ENCODE measurements at regions of chr12 and their contacts with region 1.

Region 1: DNA sequence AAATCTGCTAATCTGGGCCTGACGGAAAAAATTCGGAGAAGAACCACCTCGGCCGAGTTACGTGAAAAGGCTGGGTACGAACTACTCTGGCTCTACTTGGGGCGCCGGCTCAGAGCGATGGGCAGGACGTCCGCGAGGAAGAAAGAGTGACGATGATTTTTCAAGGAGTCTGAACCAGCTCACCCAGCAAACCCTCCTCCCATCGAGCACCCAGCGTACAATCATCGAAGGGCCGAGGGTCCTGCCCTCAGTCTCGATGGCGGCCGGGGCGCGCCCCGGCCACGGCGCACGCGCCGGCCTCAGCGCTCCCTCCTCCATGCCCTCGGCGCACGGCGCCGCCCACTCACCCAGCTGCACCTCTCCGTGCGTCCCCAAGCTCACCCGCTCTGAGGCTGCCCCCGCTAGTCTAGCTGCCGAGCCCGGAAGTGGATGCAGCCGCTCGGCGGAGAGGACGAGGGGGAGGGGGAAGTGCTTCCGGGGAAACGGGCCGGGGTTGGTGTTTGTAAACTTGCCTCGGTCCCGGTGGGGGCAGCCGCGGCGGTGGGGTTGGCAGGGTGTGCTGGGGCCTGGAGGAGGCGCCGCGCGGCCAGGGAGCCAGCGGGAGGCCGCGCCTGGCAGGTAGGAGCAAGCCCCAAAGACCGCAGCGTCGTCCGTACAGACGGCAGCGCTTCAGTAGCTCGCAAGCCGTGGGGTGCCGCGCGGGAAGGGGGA is at the starts of genes CSAD and ZNF740:
- DNase-seq: peak; percentile 98
- H3K4me3 Mint-ChIP-seq: peak within 1 kb of the TSS; percentile 87
- H3K27ac Mint-ChIP-seq: peak within 1 kb of the TSS; percentile 96
- H3K4me1 Mint-ChIP-seq: peaks cover 51% of the 10 kb centered on the region
- H3K27me3 Mint-ChIP-seq: no peaks in the 10 kb centered on the region
- total RNA-seq, gene CSAD: 31.5 to 32.3 TPM
- total RNA-seq, gene ZNF740: 40.4 to 42.0 TPM

Region 2: DNA sequence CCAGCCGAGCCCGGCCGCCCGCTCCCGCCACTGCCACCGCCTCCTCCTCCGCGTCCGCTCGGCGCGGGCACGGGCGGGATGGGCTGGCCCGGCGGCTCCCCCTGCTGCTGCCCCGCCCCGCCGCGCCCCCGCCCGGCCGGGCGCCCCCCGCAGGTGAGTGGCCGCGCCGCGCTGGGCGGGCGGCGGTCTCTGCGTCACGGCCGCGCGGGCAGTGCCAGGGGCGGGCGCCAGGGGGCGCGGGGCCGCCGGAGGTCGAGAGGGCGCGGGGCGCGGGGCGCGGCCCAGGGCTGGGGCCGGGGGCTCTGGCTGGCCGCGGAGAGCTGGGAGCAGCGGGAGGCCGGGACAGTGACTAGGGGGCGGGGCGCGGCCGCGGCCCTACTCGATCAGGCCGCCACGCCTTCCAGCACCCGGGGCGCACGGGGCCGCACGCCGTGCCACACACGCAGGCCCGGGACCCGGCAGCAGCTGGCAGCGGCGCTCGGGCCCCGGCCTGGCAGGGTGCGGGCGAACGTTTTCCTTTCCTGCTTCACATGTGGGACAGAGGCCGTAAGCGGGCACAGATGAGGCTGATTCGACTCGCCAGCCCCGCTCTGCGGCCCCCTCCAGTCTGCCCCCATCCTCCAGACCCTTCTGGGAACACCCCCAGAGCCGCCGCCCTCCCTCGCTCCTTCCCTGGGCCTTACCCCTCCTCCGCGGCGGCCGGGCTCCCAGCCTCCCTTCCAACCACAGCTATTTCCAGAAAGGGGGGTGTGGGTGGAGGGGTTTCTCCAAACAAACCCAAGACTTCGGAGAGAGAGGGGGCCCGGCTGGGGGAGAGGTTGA is 132.9 kb before region 1 on chr12:
- CTCF ChIA-PET with region 1: no interaction called
- intact Hi-C with region 1: loop called (anchors 5 kb)
- DNase-seq: peak; percentile 59
- H3K4me3 Mint-ChIP-seq: peak overlapping the region; percentile 9
- H3K27ac Mint-ChIP-seq: no peak overlapping the region
- H3K4me1 Mint-ChIP-seq: peaks cover 26% of the 10 kb centered on the region
- H3K27me3 Mint-ChIP-seq: peaks cover 4% of the 10 kb centered on the region

Region 3: GRCh38 chr12:53200458-53201176 is 20.2 kb after region 1 on chr12:
- CTCF ChIA-PET with region 1: interaction called, 25 read pairs
- intact Hi-C with region 1: loop called (anchors 1 kb)
- DNase-seq: peak; percentile 71
- H3K4me3 Mint-ChIP-seq: peak overlapping the region; percentile 45
- H3K27ac Mint-ChIP-seq: peak overlapping the region; percentile 90
- H3K4me1 Mint-ChIP-seq: peaks cover 74% of the 10 kb centered on the region
- H3K27me3 Mint-ChIP-seq: no peaks in the 10 kb centered on the region

Region 4: GRCh38 chr12:53220801-53221202 is 40.4 kb after region 1 on chr12:
- CTCF ChIA-PET with region 1: interaction called, 3 read pairs
- intact Hi-C with region 1: loop called (anchors 1 kb)
- DNase-seq: peak; percentile 80
- H3K4me3 Mint-ChIP-seq: peak overlapping the region; percentile 90
- H3K27ac Mint-ChIP-seq: peak overlapping the region; percentile 92
- H3K4me1 Mint-ChIP-seq: peaks cover 72% of the 10 kb centered on the region
- H3K27me3 Mint-ChIP-seq: no peaks in the 10 kb centered on the region

Region 5: GRCh38 chr12:53236443-53237111 is 56.2 kb after region 1 on chr12:
- CTCF ChIA-PET with region 1: no interaction called
- intact Hi-C with region 1: no loop called
- DNase-seq: peak; percentile 55
- H3K4me3 Mint-ChIP-seq: no peak overlapping the region
- H3K27ac Mint-ChIP-seq: peak overlapping the region; percentile 20
- H3K4me1 Mint-ChIP-seq: peaks cover 43% of the 10 kb centered on the region
- H3K27me3 Mint-ChIP-seq: no peaks in the 10 kb centered on the region

Region 6: GRCh38 chr12:53379389-53380103 is 199.2 kb after region 1 on chr12:
- CTCF ChIA-PET with region 1: no interaction called
- intact Hi-C with region 1: loop called (anchors 1 kb)
- DNase-seq: peak; percentile 99
- H3K4me3 Mint-ChIP-seq: no peak overlapping the region
- H3K27ac Mint-ChIP-seq: no peak overlapping the region
- H3K4me1 Mint-ChIP-seq: peaks cover 48% of the 10 kb centered on the region
- H3K27me3 Mint-ChIP-seq: no peaks in the 10 kb centered on the region